Lower leg skin (tissue), 4 donors: ENCODE measurements at regions of chr1 and their contacts with region 1.

Region 1: GRCh38 chr1:244272471-244273261 is 179.0 kb downstream of the ADSS2 start:
- DNase-seq: peak; percentile 68 to 92
- H3K4me3 ChIP-seq: no peak overlapping the region
- CTCF ChIP-seq: peak in 1 of 3 donors; percentile 98
- POLR2A ChIP-seq: no peak

Region 2: DNA sequence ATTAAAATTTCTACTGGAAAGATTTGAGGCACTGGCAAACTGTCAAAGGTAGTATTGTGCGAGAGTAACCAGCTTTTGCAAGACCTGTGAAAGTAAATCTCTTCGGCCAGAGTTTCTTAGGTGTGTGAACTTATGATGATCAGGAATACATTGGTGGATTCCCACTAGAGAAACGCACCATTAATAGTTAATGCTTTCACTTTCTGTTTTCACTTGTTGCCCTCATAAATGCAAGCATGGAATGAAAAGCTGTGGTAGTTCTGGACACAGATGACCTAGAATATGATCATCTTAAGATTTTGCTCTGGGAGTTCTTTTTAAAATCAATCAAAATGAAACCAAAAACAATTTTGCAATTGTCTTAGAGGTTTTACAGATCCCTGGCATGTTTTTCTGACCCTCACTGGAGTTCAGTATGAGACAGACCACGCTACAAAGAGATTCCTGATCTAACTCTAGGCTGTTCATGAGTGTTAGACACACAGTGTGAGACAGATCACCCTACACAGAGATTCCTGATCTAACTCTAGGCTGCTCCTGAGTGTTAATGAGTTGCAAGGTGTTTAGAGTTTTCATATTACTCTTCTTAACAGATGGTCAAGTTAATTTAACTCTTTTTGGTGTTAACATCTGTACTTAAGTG is 918.0 kb before region 1 on chr1:
- intact Hi-C with region 1: loop called (anchors 10 kb)
- DNase-seq: no peak
- H3K4me3 ChIP-seq: no peak overlapping the region
- CTCF ChIP-seq: no peak
- POLR2A ChIP-seq: no peak

Region 3: DNA sequence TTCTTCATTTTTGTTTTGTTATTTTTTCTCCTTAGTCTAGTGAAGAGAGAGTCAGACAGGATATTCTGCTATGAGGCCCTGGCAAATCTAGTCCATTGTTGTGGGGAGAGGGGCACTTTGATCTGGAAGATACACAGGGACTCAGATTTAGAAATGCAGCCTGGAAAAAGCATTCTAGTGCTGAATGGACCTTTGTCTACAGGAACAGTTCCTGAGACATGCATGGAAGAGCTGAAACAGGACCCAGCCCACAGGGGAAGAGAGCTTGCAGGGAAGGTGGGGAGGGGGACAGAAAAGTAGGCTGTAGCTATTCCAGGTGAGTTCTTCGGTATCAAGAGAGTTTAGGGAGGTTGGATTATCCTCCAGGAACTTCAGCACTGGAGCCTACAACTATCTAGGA is 521.2 kb before region 1 on chr1:
- intact Hi-C with region 1: loop called (anchors 10 kb)
- DNase-seq: no peak
- H3K4me3 ChIP-seq: no peak overlapping the region
- CTCF ChIP-seq: no peak
- POLR2A ChIP-seq: no peak